ENCODE measurements at regions of chr5 and their contacts with region 1.

Region 1: DNA sequence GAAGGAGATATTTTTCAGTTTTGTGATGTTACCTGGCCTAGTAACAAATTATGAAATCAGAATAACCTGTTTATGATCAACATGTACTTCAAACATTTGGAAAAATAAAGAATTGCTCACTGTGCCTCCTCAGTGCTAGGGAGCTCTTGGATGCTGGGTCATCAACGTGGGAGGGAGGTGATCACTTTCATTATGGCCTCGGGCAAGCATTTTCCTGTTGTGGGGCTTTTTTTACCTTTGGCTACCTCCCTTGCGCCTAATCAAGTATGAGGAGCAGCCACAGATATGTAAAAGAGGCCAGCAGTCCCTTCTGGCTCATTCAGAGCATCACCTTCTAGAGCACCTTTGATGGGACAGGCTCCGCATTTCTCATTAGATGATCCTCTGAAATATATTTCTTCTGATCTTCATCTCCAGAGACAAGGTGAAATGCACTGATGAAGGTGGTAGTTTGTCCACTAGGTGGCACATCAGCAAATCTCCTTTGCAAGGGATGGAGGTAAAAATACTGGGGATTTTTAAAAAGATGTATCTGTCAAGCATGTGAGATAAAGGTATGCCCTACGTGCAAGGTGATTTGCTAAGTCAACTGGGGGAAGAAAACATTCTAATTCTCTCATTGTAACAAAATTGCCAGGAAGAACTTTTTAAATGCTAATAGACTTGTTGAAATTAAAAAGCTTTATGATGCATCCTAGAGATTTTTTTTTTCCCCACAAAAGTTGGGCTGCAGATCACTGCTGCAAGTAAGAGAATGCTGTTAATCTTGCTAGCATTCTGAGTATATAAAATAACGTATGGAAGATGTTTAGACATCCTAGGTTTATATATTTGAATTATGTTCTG is 218.2 kb downstream of the MAST4 start:
- DNase-seq: no peak
- H3K4me3 ChIP-seq: no peak overlapping the region
- H3K27ac ChIP-seq: no peak overlapping the region
- H3K4me1 ChIP-seq: peaks cover 31% of the 10 kb centered on the region
- H3K27me3 ChIP-seq: no peaks in the 10 kb centered on the region
- CTCF ChIP-seq: peak; percentile 82

Region 2: DNA sequence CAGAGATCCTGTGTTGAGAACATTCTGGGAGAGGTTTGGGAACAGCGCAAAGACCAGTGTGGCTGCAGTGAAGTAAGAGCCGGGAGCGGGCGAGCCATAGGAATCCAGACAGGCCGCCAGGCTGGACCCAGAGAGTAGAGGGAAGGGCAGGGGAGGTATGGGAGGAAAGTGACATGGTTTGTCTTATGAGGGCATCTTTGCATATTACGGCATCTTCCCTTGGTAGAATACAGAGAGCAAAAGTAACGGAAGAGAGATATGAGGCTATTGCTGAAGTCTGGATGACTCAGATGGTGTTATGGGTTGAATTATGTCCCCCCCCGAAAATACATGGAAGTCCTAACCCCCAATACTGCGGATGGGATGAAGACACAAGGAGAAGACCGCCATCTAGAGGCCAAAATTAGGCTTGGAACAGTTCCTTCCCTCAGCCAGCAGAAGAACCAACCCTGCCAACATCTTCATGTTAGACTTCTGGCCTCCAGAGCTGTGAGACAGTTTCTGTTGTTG is 50.0 kb after region 1 on chr5:
- intact Hi-C with region 1: loop called (anchors 10 kb)
- DNase-seq: no peak
- H3K4me3 ChIP-seq: no peak overlapping the region
- H3K27ac ChIP-seq: no peak overlapping the region
- H3K4me1 ChIP-seq: peaks cover 48% of the 10 kb centered on the region
- H3K27me3 ChIP-seq: no peaks in the 10 kb centered on the region
- CTCF ChIP-seq: peak; percentile 61

Region 3: DNA sequence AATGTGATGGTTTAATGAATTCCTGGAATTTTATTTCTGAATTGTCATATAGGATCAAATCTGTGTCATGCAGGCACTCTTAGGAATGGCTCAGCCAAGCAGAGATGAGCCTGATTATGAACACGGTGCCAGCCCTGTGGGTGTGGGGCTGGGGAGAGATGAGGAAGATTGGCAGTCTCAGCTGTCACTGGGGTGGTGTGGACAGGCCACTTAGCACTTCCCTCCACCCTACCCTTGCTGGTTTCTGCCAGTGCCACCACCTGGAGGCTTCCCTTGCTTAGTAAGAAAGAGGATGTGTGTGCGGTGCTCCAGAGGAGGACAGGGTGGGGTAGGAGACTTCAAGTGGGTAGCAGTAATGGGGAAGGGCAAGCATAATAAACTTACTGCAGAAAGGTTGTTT is 155.6 kb after region 1 on chr5:
- intact Hi-C with region 1: loop called (anchors 10 kb)
- DNase-seq: no peak
- H3K4me3 ChIP-seq: no peak overlapping the region
- H3K27ac ChIP-seq: no peak overlapping the region
- H3K4me1 ChIP-seq: peaks cover 40% of the 10 kb centered on the region
- H3K27me3 ChIP-seq: no peaks in the 10 kb centered on the region
- CTCF ChIP-seq: no peak

Measured in left ventricle myocardium inferior (tissue), 1 donor.